AG04449 (cell line): ENCODE measurements at regions of chr4 and their contacts with region 1.

Region 1: GRCh38 chr4:114208574-114209151 is 229.2 kb upstream of the ARSJ start:
- DNase-seq: peak; percentile 7
- H3K4me3 ChIP-seq: no peak overlapping the region
- CTCF ChIP-seq: no peak

Region 2: DNA sequence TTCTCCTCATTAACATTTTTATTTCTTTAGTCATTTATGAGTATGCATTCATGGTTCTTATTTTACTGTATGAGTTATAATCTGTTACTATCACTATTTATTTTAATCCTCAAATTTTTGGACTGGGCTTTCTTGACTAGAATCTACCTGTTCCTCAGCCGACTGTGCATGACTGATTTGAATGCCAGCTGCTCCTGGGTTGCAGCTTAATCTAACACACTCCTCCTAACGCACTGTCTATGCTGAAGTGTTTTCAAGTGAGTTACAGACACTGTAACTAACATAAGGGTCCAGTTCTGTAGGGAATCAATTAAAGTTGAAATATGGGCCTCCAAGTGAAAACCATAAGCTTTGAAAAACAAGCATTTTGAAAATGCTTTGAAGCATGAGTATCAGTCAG is 91.8 kb before region 1 on chr4:
- CTCF ChIA-PET with region 1: no interaction called
- POLR2A ChIA-PET with region 1: no interaction called
- DNase-seq: no peak
- H3K4me3 ChIP-seq: no peak overlapping the region
- CTCF ChIP-seq: no peak

Region 3: DNA sequence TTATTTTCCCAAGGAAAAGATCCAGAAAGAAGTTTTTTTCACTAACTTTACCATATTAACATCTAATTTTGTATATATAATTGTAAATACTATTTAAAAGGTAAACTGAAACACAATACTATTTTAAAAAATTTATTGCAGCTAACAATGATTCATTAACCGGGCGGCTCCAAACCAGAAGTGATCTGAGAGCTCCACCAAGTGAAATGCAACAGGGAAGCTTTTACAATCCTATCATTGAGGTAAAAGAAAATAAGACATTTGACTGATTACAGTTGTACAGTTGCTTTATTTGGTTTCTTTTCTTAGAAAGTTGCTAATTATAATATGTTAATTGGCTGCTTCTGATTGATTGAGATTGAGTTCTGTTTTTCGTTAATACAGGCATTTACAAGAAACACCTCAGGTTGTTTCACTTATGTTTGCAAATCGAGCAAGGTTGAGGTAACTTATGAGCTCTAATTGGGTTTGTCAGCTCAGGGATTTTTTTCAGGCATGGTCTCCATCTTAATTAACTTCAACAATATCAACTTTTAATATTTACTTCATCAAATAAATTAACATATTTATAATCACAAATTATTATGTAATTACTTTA is 169.7 kb after region 1 on chr4:
- CTCF ChIA-PET with region 1: interaction called, 10 read pairs
- POLR2A ChIA-PET with region 1: no interaction called
- DNase-seq: no peak
- H3K4me3 ChIP-seq: no peak overlapping the region
- CTCF ChIP-seq: peak; percentile 48